ENCODE measurements at regions of chr5 and their contacts with region 1.

Region 1: GRCh38 chr5:138132543-138132942 is 6.7 kb downstream of the NME5 start:
- DNase-seq: no peak
- H3K4me3 ChIP-seq: peak overlapping the region in 1 of 4 donors; percentile 51
- H3K27ac ChIP-seq: no peak overlapping the region
- H3K4me1 ChIP-seq: no peaks in the 10 kb centered on the region
- H3K27me3 ChIP-seq: no peaks in the 10 kb centered on the region
- CTCF ChIP-seq: no peak
- POLR2A ChIP-seq: no peak

Region 2: GRCh38 chr5:137954131-137954879 is 178.2 kb before region 1 on chr5:
- intact Hi-C with region 1: no loop called
- DNase-seq: no peak
- H3K4me3 ChIP-seq: no peak overlapping the region
- H3K27ac ChIP-seq: peak overlapping the region in 2 of 4 donors; percentile 25 to 55
- H3K4me1 ChIP-seq: peaks cover 0 to 13% (median 6%) of the 10 kb centered on the region in 3 donors
- H3K27me3 ChIP-seq: no peaks in the 10 kb centered on the region
- CTCF ChIP-seq: no peak
- POLR2A ChIP-seq: no peak

Region 3: DNA sequence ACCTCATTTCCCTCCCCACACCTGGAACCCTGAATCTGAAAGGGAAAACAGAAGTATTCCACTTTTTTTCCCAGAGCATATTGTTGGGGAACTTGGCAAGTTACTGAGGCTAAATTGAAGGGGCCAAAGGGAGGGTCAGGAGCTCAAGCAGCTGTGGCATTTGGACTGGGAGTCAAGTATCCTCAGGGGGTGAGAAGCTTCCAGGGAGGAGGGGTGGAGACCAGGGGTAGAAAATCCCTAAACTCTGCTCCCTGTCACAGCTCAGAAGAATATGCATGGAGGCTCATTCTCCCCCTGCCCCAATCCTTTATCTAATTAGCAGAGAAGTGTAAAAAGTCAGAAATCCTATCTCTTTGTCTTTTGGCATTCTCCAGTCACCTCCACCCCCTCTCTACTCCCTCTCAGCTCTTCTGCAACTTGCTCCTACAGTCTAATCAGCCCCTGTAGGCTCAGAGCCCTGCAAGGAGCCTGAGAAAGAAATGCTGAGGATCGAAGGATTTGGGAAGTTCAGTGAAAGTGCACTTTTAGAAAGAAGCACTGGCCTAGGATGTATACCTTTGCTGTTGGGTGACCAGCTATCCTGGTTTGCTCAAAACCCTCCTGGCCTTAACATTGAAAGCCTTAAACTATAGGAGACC is 54.4 kb before region 1 on chr5:
- intact Hi-C with region 1: loop called (anchors 2 kb)
- DNase-seq: no peak
- H3K4me3 ChIP-seq: no peak overlapping the region
- H3K27ac ChIP-seq: no peak overlapping the region
- H3K4me1 ChIP-seq: no peaks in the 10 kb centered on the region
- H3K27me3 ChIP-seq: no peaks in the 10 kb centered on the region
- CTCF ChIP-seq: no peak
- POLR2A ChIP-seq: no peak

Region 4: GRCh38 chr5:138408023-138408422 is 275.5 kb after region 1 on chr5:
- intact Hi-C with region 1: no loop called
- DNase-seq: no peak
- H3K4me3 ChIP-seq: no peak overlapping the region
- H3K27ac ChIP-seq: no peak overlapping the region
- H3K4me1 ChIP-seq: peaks cover 0 to 9% (median 0%) of the 10 kb centered on the region in 3 donors
- H3K27me3 ChIP-seq: no peaks in the 10 kb centered on the region
- CTCF ChIP-seq: no peak
- POLR2A ChIP-seq: no peak

Measured in esophagus squamous epithelium (tissue), 5 donors.